ENCODE measurements at regions of chr4 and their contacts with region 1.

Region 1: DNA sequence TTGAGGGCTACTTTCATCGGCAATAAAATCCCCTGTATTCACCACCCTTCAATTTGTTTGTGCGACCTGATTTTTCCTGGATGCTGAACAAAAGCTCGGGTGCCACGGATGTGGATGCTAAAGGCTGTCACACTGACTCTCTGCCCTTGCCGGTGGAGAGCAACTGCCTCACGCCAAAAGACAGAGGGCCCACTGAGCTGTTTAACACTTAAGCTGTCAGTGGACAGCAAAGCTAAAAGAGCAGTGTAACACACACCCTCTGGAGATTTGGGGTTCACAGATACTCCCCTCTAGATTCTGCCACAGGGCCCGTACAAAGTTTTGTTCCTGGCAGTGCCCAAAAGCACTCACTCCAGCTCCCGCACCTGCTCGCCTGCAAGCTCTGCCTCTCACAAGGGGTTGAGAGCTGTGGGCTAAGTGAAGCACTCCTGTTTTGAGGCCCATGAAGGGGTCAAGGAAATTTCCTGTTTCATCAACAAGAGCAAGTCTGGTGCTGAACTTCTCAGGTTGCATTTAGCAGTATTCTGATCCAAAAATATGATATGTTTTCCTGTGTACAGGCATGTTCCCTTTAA is 1571.9 kb downstream of the ADGRL3 start:
- DNase-seq: no peak

Region 2: GRCh38 chr4:62709618-62710252 is 62.3 kb before region 1 on chr4:
- intact Hi-C with region 1: no loop called
- DNase-seq: no peak

Region 3: GRCh38 chr4:63029379-63029778 is 257.3 kb after region 1 on chr4:
- intact Hi-C with region 1: no loop called
- DNase-seq: no peak

Region 4: GRCh38 chr4:63105839-63106238 is 333.8 kb after region 1 on chr4:
- intact Hi-C with region 1: loop called in 1 of 2 experiments (anchors 5 kb)
- DNase-seq: no peak

Measured in posterior vena cava (tissue), 2 donors.